IMR-90 (cell line): ENCODE measurements at regions of chr6 and their contacts with region 1.

Region 1: GRCh38 chr6:41964201-41964887 is 22.7 kb upstream of the CCND3 start:
- DNase-seq: no peak
- ATAC-seq: no peak
- H3K4me3 ChIP-seq: no peak overlapping the region
- H3K27ac ChIP-seq: no peak overlapping the region
- H3K4me1 ChIP-seq: peaks cover 10% of the 10 kb centered on the region
- H3K27me3 ChIP-seq: no peaks in the 10 kb centered on the region
- CTCF ChIP-seq: no peak
- POLR2A ChIP-seq: no peak
- RAD21 ChIP-seq: no peak

Region 2: GRCh38 chr6:41798901-41799558 is 165.3 kb before region 1 on chr6:
- CTCF ChIA-PET with region 1: no interaction called
- POLR2A ChIA-PET with region 1: no interaction called
- dilution Hi-C with region 1: no loop called
- in situ Hi-C with region 1: no loop called
- intact Hi-C with region 1: no loop called
- DNase-seq: no peak
- ATAC-seq: no peak
- H3K4me3 ChIP-seq: no peak overlapping the region
- H3K27ac ChIP-seq: no peak overlapping the region
- H3K4me1 ChIP-seq: no peaks in the 10 kb centered on the region; the same call in 1 of the 2 replicates
- H3K27me3 ChIP-seq: no peaks in the 10 kb centered on the region
- CTCF ChIP-seq: no peak
- POLR2A ChIP-seq: no peak
- RAD21 ChIP-seq: no peak

Region 3: DNA sequence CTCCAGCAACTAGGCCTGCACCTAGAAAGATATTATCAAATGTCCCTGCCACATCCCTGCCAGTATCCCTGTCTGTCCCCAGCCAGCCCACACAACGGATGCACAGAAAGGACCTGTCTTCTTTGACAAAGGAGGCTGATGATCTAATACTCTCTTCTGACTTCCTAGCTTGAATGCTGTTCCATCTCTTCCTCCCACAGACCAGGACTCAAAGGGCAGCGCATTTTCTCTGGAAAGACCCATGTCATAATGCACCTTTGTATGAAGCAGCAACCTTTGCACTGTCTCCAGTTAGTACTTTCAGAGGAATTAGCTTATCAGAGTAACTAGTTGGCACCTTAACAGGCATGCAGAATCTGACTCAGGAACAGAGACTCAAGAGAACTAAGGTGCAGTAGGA is 32.7 kb after region 1 on chr6:
- CTCF ChIA-PET with region 1: no interaction called
- POLR2A ChIA-PET with region 1: no interaction called
- dilution Hi-C with region 1: no loop called
- in situ Hi-C with region 1: no loop called
- intact Hi-C with region 1: loop called (anchors 5 kb)
- DNase-seq: no peak
- ATAC-seq: no peak
- H3K4me3 ChIP-seq: no peak overlapping the region
- H3K27ac ChIP-seq: no peak overlapping the region
- H3K4me1 ChIP-seq: no peaks in the 10 kb centered on the region
- H3K27me3 ChIP-seq: no peaks in the 10 kb centered on the region
- CTCF ChIP-seq: no peak
- POLR2A ChIP-seq: no peak
- RAD21 ChIP-seq: no peak

Region 4: DNA sequence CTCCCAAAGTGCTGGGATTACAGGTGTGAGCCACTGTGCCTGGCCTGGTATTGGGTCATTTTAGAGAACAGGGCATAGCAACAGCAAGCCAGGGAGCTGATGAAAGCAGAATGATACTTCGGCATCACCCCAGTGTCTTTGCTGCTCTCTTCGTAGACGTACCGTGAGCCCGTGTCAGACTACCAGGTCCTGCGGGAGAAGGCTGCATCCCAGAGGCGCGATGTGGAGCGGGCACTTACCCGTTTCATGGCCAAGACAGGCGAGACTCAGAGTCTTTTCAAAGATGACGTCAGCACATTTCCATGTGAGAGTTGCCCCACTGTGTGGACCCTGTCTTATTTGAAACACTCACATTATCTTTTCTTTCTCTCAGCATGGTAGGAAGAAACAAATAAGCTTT is 101.8 kb after region 1 on chr6:
- CTCF ChIA-PET with region 1: no interaction called
- POLR2A ChIA-PET with region 1: no interaction called
- dilution Hi-C with region 1: no loop called
- in situ Hi-C with region 1: no loop called
- intact Hi-C with region 1: no loop called
- DNase-seq: no peak
- ATAC-seq: no peak
- H3K4me3 ChIP-seq: no peak overlapping the region
- H3K27ac ChIP-seq: no peak overlapping the region
- H3K4me1 ChIP-seq: no peaks in the 10 kb centered on the region
- H3K27me3 ChIP-seq: no peaks in the 10 kb centered on the region
- CTCF ChIP-seq: no peak
- POLR2A ChIP-seq: no peak
- RAD21 ChIP-seq: no peak